ENCODE measurements at regions of chr7 and their contacts with region 1.

Region 1: GRCh38 chr7:140517546-140518369 is 38.5 kb upstream of the MKRN1 start:
- DNase-seq: peak; percentile 86 to 94 (median 90)
- ATAC-seq: peak; percentile 84 to 96 (median 95)
- H3K4me3 ChIP-seq: no peak overlapping the region
- H3K27ac ChIP-seq: peak overlapping the region in 8 of 12 donors; percentile 7 to 68 (median 28)
- H3K4me1 ChIP-seq: peaks cover 0 to 21% (median 15%) of the 10 kb centered on the region in 12 donors
- H3K27me3 ChIP-seq: no peaks in the 10 kb centered on the region
- CTCF ChIP-seq: peak; percentile 78 to 93 (median 88)
- POLR2A ChIP-seq: no peak

Region 2: DNA sequence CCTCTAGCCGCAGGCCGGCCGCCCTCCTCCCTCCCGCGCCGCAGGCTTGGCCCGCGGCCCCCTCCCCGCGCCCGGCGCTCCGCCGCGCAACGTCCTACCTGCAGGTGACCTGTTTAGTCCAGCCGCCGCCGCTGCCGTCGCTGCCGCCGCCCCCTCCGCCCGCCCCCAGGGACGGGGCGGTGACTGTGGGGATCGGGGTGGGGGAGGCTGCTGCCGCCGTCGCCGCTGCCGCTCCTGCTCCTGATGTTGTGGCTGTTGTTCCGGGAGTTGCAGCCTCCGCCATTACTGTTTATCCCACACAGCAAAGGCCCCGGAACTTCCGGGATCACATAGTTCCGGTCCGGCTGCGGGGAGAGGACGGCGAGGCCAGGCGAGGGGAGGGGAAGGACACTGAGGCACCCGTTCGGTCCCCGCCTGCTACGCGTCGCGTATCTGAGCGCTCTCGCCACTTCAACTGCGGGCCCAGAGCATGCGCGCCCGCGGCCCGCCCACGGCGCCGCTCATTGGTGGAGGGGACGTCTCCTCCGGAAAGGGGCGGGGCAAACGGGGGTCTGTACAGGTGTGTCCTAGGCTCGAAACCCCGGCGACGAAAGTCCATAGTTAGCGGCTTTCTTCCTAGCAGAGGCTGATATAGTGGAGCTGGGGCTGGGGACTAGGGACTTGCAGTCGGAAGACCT is 38.6 kb before region 1 on chr7 and contains the start of gene MKRN1:
- intact Hi-C with region 1: loop called in 2 of 10 experiments (anchors 5 kb)
- DNase-seq: peak; percentile 93 to 97 (median 96)
- ATAC-seq: peak; percentile 98 to 99 (median 99)
- H3K4me3 ChIP-seq: peak within 1 kb of the TSS; percentile 68 to 100 (median 94)
- H3K27ac ChIP-seq: peak within 1 kb of the TSS; percentile 73 to 91 (median 84)
- H3K4me1 ChIP-seq: peaks cover 0 to 33% (median 22%) of the 10 kb centered on the region in 12 donors
- H3K27me3 ChIP-seq: no peaks in the 10 kb centered on the region
- CTCF ChIP-seq: no peak
- POLR2A ChIP-seq: peak in 1 of 2 donors; percentile 84
- total RNA-seq, gene MKRN1: 52.3 to 109 (median 100) TPM

Region 3: DNA sequence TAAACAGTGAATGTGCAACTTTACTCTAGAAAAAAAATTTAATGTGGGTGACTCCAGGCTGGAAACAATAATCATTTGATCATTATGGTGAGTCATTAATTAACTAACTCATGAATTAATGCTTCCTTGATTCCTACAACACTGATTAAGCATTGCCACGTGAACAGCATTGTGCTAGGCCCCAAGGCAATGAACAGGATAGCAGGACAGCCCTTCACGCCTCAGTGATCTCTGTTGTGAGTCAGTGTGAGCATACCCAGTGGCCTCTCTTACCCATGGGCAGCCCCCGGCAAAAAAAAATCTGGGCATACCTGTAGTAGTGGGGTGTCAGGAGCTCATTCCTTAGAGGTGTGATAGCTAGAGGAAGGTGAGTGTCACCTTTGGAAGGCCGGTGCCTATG is 46.9 kb after region 1 on chr7:
- intact Hi-C with region 1: loop called in 1 of 10 experiments (anchors 1 kb)
- DNase-seq: peak in 1 of 5 donors; percentile 5
- ATAC-seq: no peak
- H3K4me3 ChIP-seq: no peak overlapping the region
- H3K27ac ChIP-seq: no peak overlapping the region
- H3K4me1 ChIP-seq: peaks cover 0 to 33% (median 17%) of the 10 kb centered on the region in 12 donors
- H3K27me3 ChIP-seq: no peaks in the 10 kb centered on the region
- CTCF ChIP-seq: no peak
- POLR2A ChIP-seq: no peak

Region 4: DNA sequence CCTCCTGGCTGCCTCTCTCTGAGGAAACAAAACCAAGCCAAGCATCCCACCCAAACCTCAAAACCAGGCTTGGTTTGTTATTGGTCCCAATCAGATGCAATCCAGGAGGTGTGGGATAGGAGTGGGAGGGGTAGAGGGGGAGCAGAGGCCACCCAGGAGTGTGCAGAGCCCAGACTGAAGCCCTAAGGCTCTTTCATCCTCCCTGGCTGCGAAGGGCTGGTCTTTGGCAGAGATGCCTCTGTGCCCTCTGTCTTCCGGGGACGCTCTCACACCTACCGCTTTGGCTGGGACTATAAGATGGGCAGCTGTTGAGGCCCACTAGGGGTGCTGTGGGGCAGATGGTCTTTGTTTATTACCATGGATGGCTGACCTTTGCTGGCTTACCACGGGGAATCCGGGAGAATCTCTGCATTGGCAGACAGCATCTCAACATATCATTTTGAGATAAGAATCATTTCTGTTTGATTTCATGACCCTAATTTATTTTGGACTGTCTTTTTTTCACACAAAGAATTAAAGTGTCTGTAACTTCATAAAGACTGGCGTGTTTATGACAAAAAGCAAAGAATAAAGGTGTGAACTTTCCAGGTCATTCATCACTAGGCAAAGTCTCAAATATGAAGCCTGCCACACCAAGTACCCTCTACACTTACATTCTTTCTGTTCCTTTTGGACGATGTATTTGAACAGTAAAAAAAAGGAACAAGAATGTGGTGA is 129.3 kb after region 1 on chr7:
- intact Hi-C with region 1: loop called in 2 of 10 experiments (anchors 1 to 2 kb)
- DNase-seq: peak in 1 of 5 donors; percentile 32
- ATAC-seq: peak; percentile 60 to 71 (median 69)
- H3K4me3 ChIP-seq: no peak overlapping the region
- H3K27ac ChIP-seq: no peak overlapping the region
- H3K4me1 ChIP-seq: peaks cover 0 to 18% (median under 1%) of the 10 kb centered on the region in 12 donors
- H3K27me3 ChIP-seq: no peaks in the 10 kb centered on the region
- CTCF ChIP-seq: peak; percentile 18 to 63 (median 42)
- POLR2A ChIP-seq: no peak

Region 5: DNA sequence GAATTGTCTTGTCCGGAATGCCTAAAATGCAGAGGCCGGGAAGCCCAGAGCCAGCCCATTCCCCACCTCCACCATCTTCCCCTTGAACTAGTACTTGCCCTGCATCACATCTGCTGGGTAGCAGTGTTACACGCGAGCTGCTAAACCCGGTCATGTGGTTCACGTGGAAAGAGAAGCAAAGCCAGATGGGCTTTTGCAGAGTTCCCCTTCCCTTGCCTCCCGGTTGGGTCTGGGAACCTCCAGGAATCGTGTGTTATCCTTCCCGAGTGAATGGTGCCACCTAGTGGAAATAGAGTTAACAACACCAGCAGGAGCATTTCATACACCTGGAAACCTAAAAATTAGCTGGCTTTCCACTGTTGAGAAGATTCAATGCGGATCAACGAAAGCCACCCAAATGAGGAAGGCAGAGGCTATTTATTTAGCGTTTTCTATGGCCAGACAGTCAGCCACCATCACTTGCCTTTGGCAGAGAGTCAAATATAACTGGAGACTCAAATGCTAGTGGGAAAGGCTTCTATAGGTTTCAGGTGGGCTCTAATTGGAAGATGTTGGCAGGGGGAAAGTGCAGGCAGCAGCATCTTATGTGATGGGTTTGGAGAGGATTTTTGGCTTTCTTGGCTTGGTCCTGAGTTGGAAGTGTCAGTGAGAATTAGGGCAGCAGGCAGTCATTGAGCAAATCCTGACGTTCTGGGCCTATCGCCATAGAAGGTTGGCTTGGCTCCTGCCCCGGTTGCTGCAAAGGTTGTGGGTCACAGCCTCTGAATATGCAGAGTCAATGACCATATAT is 135.8 kb after region 1 on chr7:
- intact Hi-C with region 1: loop called (anchors 1 to 2 kb)
- DNase-seq: peak in 4 of 5 donors; percentile 64 to 71 (median 64)
- ATAC-seq: peak; percentile 52 to 74 (median 68)
- H3K4me3 ChIP-seq: no peak overlapping the region
- H3K27ac ChIP-seq: no peak overlapping the region
- H3K4me1 ChIP-seq: peaks cover 0 to 42% (median 19%) of the 10 kb centered on the region in 12 donors
- H3K27me3 ChIP-seq: no peaks in the 10 kb centered on the region
- CTCF ChIP-seq: peak; percentile 69 to 97 (median 91)
- POLR2A ChIP-seq: no peak